ENCODE measurements at regions of chrX and their contacts with region 1.

Region 1: DNA sequence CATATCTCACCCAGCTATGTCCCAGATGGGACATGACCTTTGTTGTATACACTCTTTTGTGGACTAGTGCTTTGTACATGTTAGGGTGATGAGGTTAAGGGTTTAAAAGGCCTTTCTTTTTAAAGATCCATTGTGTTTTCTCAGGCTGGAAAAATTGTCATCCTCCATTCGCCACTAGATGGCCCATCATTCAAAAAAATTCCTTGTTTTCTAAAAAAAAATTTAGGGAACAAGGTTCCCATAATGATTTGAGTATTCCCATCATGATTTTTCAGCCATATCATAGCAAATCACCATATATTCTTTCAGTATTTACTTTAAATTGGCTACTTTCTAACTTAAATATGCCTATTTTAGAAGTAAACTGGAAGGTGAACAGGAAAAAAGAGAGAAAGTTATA is 91.9 kb upstream of the TMEM164 start:
- DNase-seq: no peak
- H3K4me3 ChIP-seq: no peak overlapping the region
- H3K27ac ChIP-seq: no peak overlapping the region
- H3K4me1 ChIP-seq: no peaks in the 10 kb centered on the region
- H3K27me3 ChIP-seq: no peaks in the 10 kb centered on the region
- CTCF ChIP-seq: peak; percentile 61

Region 2: DNA sequence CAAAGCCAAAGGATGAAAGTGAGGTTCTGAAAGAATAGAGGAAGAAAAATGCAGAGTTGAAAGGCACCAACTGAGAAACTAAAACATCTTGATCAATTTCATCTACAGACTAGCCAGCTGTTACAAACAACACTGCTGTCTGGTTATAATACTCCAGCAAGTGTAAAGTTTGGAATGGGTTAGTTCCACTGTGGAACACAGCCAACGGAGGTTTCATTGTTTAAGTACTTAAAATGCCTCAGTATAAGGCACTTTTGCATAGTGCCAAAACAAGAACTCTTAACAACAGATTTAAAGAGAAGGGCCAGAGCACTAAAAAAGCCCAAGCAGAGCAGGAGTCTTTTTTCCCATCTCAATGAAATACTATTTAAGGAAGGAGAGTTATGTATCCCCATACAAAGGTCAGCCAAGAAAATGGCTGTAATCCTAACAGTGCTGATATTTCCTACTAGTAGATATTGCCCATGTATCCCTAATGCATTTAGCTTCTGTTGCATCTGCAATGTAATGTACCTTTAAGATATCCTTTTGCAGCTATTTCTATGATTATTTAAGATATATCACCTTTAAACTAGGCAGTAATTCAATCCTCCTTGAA is 194.5 kb before region 1 on chrX:
- CTCF ChIA-PET with region 1: no interaction called
- POLR2A ChIA-PET with region 1: no interaction called
- intact Hi-C with region 1: no loop called
- DNase-seq: no peak
- H3K4me3 ChIP-seq: no peak overlapping the region
- H3K27ac ChIP-seq: no peak overlapping the region
- H3K4me1 ChIP-seq: peaks cover 4% of the 10 kb centered on the region
- H3K27me3 ChIP-seq: no peaks in the 10 kb centered on the region
- CTCF ChIP-seq: no peak

Region 3: DNA sequence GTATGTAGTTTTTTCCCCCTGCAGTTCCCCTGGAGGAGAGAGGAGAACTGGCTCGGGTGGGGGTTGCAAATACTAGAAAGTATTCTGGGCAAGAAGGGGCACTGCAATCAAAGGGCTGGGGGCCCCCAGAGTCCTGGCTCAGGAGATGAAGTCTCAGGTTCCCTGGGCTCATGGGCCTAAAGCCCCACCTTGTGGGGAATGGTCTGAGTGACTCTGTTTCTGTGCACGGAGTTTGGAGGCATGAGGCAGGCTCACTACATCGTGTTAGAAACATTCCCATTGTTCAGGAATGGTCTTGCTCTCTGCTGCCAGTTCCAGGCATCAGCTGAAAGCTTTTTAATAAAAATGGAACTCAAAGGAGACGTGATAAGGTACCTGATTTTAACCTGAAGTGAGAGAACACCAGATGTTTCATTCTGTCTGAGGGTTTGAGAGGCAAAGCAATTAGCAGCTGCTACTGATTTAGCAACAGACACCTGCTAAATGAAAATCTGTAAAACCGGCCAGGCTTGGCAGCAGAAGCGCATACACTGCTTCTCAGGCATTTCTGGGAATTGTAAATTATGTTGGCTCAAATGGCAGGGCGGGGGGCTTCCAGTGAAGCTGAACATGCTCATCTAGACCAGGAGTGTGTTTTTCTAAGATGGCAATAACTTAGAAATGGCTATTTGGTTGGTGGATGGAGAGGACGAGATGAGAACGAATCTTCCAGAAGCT is 214.6 kb after region 1 on chrX:
- CTCF ChIA-PET with region 1: no interaction called
- POLR2A ChIA-PET with region 1: no interaction called
- intact Hi-C with region 1: loop called (anchors 2 kb)
- DNase-seq: peak; percentile 12
- H3K4me3 ChIP-seq: no peak overlapping the region
- H3K27ac ChIP-seq: no peak overlapping the region
- H3K4me1 ChIP-seq: no peaks in the 10 kb centered on the region
- H3K27me3 ChIP-seq: no peaks in the 10 kb centered on the region
- CTCF ChIP-seq: peak; percentile 44; the same call in 1 of the 2 replicates

Region 4: DNA sequence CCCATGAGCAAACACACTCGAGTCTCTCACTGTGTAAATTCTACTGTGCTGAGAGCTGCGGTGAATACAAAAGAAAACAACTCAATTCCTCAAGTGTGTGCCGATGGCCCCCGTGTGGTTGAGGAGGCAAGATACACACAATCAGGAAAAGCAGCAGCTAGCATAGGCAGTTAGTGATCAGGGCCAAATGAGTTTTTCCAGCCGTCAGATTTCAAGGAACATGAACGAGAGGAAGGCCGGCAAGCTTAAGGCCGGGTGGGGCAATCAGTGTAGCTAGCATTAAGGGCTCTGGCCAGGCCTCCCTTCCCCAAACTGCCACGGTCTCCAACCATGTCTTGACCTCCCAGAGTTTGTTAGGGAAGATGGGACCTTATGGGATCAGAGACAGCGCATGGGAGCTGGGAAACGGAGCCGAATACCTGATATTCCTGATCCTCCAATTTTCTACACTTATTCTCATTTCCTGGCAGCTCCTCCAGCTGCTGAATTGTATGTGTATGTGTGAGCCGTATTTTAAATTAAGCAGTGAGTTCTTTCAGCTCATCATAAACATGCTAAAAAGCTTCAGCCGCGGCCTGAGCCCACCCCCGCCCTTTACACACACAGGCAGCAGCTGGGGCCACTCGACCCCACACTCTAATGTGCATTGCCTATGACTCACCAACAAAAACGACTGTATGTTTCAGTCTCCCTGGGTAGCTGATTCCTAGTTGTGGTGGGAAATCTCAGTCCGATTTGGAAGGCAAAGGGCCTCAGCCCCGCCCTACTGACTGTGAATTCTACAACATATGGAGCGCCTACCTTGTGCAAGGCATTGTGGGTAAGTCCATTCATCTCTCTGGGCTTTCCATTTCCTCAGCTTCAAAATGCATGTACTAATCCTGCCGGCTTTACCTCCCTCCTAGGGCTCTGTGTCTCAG is 507.5 kb after region 1 on chrX:
- CTCF ChIA-PET with region 1: no interaction called
- POLR2A ChIA-PET with region 1: no interaction called
- intact Hi-C with region 1: loop called (anchors 5 kb)
- DNase-seq: peak; percentile 74
- H3K4me3 ChIP-seq: no peak overlapping the region
- H3K27ac ChIP-seq: no peak overlapping the region
- H3K4me1 ChIP-seq: peaks cover 13% of the 10 kb centered on the region
- H3K27me3 ChIP-seq: no peaks in the 10 kb centered on the region
- CTCF ChIP-seq: peak; percentile 60

Measured in A673 (cell line).